GM10248 (cell line): ENCODE measurements at regions of chr9 and their contacts with region 1.

Region 1: DNA sequence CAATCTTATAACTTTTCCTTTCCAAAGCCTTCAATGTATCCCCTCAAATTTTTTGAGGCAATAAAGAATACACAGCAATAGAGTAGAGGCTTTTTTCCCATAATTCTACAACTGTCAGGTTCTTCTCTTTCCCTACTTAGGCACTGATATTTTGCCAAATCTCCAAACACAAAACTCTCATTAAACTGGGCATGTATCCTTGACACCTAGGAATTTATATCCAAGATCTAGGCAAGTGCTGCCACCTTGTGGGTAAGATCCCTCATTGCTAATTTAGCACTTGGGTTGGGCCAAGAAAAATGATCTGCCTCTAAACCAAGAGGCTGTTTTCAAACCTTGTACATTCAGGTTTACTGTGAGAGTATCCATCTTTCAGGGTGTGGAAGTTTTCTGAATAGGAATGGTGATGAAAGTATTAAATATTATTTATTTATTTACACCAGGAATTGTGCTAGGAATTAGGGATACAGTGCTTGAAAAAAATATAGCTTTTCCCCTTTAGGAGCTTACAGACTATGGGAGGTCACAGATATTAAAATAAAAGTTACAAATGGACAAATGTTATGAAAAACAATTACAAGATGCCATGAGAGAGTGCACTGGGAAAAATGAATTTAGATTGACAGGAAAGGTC is 17.6 kb downstream of the TSTD2 start:
- DNase-seq: peak; percentile 63
- CTCF ChIP-seq: peak; percentile 82

Region 2: GRCh38 chr9:96398582-96399324 is 1216.8 kb before region 1 on chr9:
- CTCF ChIA-PET with region 1: no interaction called
- POLR2A ChIA-PET with region 1: no interaction called
- DNase-seq: peak; percentile 28
- CTCF ChIP-seq: no peak

Region 3: GRCh38 chr9:96854073-96854876 is 761.3 kb before region 1 on chr9 and contains the start of gene ZNF782:
- CTCF ChIA-PET with region 1: interaction called, 13 read pairs
- POLR2A ChIA-PET with region 1: no interaction called
- DNase-seq: peak; percentile 91
- CTCF ChIP-seq: no peak

Region 4: DNA sequence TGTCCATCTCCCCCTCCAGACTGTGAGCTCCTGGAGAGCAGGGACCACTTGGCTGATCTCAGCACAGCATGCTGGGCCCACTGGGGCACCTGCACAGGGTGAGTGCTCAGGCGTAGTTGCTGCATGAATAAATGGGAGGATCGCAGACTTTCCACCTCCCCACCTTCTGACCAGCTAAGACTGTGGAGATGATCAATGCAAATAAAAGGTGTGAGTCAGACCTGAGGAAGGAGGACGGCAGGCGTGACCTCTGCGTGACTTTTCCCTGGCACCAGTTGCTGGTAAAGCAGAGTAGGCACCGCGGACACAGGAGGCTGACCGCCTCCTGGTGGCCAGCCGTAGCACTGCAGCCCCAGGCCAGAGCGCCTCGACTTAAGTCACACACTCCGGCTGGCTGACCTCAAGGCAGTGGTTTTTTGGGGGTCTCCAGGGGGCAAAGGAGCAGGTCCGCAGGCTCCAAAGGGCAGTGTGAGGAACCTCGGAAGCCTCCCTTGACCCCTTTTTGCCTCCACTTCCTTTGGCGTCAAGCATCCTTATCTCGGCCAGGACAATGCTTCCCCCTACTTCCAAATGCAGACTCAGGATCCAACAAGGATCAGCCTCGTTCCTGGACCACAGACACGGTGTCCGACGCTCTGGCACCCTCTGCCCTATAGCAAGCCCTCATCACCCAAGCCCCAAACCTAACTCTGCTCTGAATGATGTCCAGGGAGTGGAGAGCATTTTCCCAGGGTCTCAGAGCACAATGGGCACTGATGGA is 216.4 kb before region 1 on chr9:
- CTCF ChIA-PET with region 1: interaction called, 10 read pairs
- POLR2A ChIA-PET with region 1: no interaction called
- DNase-seq: peak; percentile 84
- CTCF ChIP-seq: peak; percentile 95

Region 5: DNA sequence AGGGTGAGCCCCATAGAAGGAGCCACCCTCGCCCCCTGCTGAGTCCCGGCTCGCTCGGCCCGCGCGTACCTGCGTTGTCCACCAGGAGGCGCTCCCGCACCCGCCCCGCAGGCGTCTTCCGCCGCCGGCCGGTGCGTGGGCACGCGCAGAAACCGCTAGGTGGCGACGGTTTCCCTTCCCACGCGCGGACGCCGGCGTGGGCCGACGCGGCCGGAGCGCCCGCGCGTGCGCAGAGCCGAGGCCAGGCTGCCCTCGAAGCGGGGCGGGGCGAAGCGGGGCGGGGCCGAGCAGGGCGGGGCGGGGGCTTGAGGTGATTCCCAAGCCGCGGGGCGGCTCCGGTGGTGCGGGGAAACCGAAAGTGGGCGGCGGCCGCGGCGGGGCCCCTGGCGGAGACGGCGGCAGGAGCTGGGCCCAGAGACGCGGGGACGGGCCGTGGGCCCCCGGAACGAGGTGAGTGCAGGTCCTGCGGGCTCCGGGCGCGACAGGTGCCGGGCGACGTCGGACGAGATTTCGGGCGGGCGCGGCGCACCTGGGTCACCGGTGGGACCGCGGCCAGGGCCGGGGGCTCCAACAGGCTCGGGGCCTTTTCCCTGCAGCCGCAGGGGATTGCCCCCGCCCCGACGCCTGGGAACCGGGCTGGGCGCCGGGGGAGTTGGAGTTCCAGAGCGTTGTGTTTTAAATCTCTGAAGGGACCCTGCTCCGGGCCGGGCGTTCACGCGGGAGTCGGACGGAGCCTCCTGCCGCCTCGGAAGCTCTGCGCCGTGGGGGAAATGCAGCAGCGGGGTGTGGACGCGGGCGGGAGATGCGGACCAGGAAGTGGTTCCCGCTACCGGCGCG is 203.5 kb before region 1 on chr9 and contains the start of gene TDRD7:
- CTCF ChIA-PET with region 1: interaction called, 13 read pairs
- POLR2A ChIA-PET with region 1: no interaction called
- DNase-seq: peak; percentile 98
- CTCF ChIP-seq: peak; percentile 100

Region 6: DNA sequence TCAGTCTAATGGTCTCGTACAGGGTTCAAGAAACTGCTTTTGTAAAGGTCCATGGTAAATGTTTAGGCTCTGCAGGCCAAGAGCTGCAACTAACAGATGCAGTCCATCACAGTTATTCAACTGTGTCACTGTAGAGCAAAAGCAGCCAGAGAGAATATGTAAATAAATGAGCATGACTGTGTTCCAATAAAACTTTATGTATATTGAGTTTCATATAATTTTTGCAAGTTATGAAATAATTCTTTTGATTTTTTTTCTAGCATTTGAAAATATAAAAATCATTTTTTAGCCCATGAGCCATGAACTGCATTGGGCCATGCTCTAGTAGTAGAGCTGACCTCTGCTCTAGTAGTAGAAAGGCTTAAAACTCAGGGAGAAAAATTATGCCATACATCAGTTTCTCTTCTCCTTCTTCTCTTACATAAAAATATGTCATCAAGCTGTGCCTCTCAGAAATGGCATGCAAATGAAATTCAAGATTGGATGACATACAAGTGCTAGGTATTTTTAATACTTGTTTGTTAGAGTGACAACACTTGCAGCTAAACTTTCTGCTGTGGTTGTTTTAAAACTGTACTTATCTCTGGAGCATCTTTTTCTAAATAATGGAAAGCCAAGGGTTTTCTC is 156.3 kb before region 1 on chr9:
- CTCF ChIA-PET with region 1: interaction called, 26 read pairs
- POLR2A ChIA-PET with region 1: interaction called, 7 read pairs
- DNase-seq: no peak
- CTCF ChIP-seq: no peak

Region 7: DNA sequence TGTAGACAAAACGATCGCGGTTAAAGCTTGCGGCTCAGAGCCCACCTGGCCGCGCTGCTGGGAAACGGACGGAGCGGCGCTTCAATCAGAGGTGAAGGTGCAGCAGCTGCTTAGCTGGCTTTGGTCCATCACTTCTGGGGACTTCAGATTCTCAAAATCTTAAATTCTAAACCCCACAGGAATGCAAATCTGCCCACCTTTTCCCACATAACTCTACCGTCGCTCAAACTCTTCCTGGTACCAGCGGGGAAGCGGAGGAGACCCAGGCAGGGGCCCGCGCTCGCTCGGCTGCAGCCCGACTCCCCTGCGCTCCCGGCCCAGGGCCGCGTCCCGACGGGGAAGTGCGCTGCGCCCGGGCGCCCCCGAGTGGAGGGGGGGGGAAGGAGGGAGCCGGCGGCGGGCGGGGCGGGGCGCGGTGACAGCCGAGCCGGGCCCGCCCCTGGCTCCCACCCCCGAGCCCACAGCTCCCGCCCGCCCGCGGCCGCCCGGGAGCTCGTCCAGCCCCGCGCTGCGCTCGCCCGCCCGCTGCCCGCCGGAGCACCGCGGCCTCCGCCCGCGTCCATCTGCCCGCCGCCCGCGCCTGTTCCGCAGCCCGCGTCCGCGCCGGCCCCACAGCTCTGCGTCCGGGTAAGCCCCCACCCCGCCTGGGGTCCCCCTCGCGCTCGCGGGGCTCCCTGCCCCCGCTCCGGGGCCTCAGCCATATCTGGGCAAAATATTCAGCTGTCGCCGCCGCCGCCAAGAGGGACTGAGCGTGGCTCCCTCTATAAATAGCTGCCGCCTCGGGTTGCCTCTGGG is 114.2 kb before region 1 on chr9 and contains the start of gene TMOD1:
- CTCF ChIA-PET with region 1: interaction called, 22 read pairs
- POLR2A ChIA-PET with region 1: no interaction called
- DNase-seq: peak; percentile 93
- CTCF ChIP-seq: peak; percentile 52

Region 8: GRCh38 chr9:97561501-97561900 is 54.1 kb before region 1 on chr9:
- CTCF ChIA-PET with region 1: no interaction called
- POLR2A ChIA-PET with region 1: no interaction called
- DNase-seq: no peak
- CTCF ChIP-seq: no peak

Region 9: DNA sequence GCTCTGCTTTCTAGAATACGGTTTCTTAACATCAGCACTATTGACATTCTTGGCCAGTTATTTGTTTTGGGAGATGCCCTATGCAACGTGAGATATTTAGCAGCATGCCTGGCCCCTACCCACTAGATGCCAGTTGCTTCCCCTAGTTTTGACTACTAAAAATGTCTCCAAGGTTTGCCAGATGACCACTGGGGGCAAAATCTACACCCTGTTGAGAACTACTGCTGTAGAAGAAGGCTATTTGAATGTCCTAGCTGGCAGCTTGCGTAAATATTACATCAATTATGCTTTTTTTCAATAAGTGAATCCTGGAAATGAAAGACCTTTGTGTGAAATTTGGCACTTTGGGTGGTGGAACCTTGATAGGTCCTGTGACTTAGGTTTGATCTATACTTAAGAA is 23.1 kb after region 1 on chr9:
- CTCF ChIA-PET with region 1: interaction called, 88 read pairs
- POLR2A ChIA-PET with region 1: no interaction called
- DNase-seq: no peak
- CTCF ChIP-seq: no peak